ENCODE measurements at regions of chr2 and their contacts with region 1.

Region 1: DNA sequence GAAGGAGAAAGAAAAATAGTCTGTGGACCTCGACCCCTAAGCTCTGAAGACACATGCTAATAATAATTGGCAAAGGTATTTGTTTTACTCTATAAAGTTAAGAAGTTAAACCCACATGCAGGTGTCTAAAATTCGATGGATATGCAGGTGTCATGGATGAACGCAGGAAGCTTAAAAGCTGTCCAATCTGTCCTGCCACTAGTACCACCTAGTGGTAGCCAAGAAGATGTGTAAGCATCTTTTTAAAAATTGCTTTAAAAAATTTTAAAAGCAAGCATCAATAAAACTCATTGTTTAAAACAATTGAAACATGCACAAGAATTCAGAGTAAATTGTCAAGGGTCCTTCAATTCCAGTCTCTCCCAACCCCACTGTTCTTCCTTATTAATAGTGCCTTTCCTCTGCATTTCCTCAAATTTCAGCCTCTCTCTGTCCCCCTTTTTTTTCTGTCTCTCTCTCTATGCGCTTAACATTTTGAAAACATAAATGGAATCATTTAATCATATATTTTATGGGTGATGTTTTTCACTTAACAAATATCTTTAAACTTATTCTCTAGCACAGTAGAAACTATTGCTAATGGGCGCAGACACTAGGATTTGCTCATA is 30.6 kb upstream of the PPP3R1 start:
- DNase-seq: peak; percentile 55
- ATAC-seq: peak; percentile 73
- H3K4me3 ChIP-seq: no peak overlapping the region
- H3K27ac ChIP-seq: no peak overlapping the region
- H3K4me1 ChIP-seq: peaks cover 21% of the 10 kb centered on the region
- H3K27me3 ChIP-seq: no peaks in the 10 kb centered on the region
- CTCF ChIP-seq: peak; percentile 86

Region 2: GRCh38 chr2:68225119-68225632 is 57.7 kb before region 1 on chr2:
- CTCF ChIA-PET with region 1: no interaction called
- POLR2A ChIA-PET with region 1: no interaction called
- intact Hi-C with region 1: no loop called
- DNase-seq: peak; percentile 48
- ATAC-seq: peak; percentile 77
- H3K4me3 ChIP-seq: no peak overlapping the region
- H3K27ac ChIP-seq: no peak overlapping the region
- H3K4me1 ChIP-seq: no peaks in the 10 kb centered on the region
- H3K27me3 ChIP-seq: no peaks in the 10 kb centered on the region
- CTCF ChIP-seq: peak; percentile 61

Region 3: GRCh38 chr2:68302281-68302875 is 19.5 kb after region 1 on chr2:
- CTCF ChIA-PET with region 1: interaction called, 10 read pairs
- POLR2A ChIA-PET with region 1: no interaction called
- intact Hi-C with region 1: no loop called
- DNase-seq: peak; percentile 38
- ATAC-seq: peak; percentile 27; the same call in 1 of the 2 replicates
- H3K4me3 ChIP-seq: no peak overlapping the region
- H3K27ac ChIP-seq: no peak overlapping the region
- H3K4me1 ChIP-seq: peaks cover 22% of the 10 kb centered on the region
- H3K27me3 ChIP-seq: no peaks in the 10 kb centered on the region
- CTCF ChIP-seq: no peak